HEK293 (cell line): ENCODE measurements at regions of chr7 and their contacts with region 1.

Region 1: DNA sequence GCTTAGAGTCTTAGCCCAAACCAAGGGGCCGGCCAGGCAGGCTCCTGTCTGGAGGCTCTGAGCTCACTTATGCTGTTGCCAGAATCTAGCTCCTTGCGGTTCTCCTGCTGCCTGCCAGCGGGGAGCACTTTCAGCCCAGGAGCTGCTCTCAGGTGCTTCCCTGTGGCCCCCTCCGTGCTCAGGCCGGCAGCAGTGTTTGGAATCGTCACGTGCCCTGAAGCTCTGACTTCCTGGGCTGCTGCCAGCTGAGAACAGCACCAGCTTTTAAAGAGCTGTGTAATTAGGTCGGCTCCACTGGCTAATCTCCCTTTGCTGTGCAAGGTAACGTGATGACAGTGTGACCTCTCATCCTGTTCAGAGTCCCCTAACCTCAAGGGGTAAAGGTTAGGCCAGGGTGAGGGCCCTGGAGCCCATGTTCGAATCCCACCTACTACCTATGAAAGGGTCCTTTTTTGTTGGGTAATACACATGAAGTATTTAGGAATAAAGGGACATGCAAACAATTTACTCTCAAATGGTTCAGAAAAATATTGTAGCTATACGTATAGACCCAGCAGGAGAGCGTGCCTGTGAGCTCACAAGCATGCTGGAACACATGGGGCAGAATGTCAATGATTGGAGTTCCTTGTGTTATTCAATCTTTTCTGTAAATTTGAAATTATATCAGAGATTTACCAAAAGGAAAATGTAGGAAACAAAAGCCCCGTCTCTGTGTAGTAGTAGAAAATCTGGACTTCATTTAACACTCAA is 16.6 kb downstream of the ZNF862 start:
- H3K4me3 ChIP-seq: no peak overlapping the region
- H3K27ac ChIP-seq: no peak overlapping the region
- H3K4me1 ChIP-seq: peaks cover 12% of the 10 kb centered on the region
- CTCF ChIP-seq: no peak

Region 2: GRCh38 chr7:149838224-149838947 is 16.4 kb before region 1 on chr7 and contains the start of gene ZNF862:
- CTCF ChIA-PET with region 1: interaction called, 13 read pairs
- POLR2A ChIA-PET with region 1: interaction called, 28 read pairs
- H3K4me3 ChIP-seq: peak within 1 kb of the TSS; percentile 77
- H3K27ac ChIP-seq: peak within 1 kb of the TSS; percentile 65
- H3K4me1 ChIP-seq: no peaks in the 10 kb centered on the region
- CTCF ChIP-seq: peak; percentile 42

Region 3: DNA sequence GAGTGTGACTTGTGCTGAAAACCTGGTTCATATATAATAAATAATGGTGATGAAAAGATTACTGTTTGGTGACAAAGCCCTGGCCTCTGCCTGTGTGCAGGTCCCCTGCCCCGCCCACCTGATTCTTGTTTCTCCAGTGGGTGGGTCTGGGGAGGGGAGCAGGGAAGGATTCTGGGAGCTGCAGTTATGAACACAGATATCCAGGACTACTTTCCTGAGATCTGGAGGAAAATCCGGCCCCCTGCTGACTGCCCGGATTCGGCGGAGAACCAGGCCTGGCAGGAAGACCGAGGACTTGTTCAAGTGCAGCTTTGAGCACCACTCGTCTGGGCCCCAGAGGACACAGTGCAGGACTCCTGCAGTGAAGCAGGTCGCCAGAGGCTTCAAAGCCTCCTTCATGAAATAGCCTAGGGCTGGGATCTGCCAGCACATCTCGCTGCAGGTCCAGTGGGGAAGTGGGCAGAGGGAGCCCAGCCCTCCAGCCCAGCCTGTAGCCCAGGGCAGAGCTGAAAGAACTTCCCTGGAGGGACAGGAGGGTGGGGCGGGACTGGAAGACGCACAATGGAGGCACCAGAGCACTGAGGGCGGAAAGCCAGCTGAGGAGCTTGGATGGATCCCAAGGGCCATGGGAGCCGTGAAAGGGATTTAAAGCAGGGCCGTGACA is 26.0 kb after region 1 on chr7:
- CTCF ChIA-PET with region 1: no interaction called
- POLR2A ChIA-PET with region 1: no interaction called
- H3K4me3 ChIP-seq: no peak overlapping the region
- H3K27ac ChIP-seq: no peak overlapping the region
- H3K4me1 ChIP-seq: no peaks in the 10 kb centered on the region
- CTCF ChIP-seq: no peak